ENCODE measurements at regions of chr6 and their contacts with region 1.

Region 1: GRCh38 chr6:31862344-31863227 is at the start of gene NEU1:
- DNase-seq: peak; percentile 100
- H3K4me3 Mint-ChIP-seq: peak within 1 kb of the TSS; percentile 90
- H3K27ac Mint-ChIP-seq: peak within 1 kb of the TSS; percentile 73
- H3K4me1 Mint-ChIP-seq: peaks cover 11% of the 10 kb centered on the region
- H3K27me3 Mint-ChIP-seq: no peaks in the 10 kb centered on the region
- total RNA-seq, gene NEU1: 8.4 to 9.2 TPM

Region 2: GRCh38 chr6:31541658-31542521 is 320.7 kb before region 1 on chr6 and contains the start of gene DDX39B:
- CTCF ChIA-PET with region 1: interaction called, 3 read pairs
- intact Hi-C with region 1: loop called (anchors 1 kb)
- DNase-seq: peak; percentile 95
- H3K4me3 Mint-ChIP-seq: peak within 1 kb of the TSS; percentile 93
- H3K27ac Mint-ChIP-seq: peak within 1 kb of the TSS; percentile 99
- H3K4me1 Mint-ChIP-seq: peaks cover 40% of the 10 kb centered on the region
- H3K27me3 Mint-ChIP-seq: no peaks in the 10 kb centered on the region
- total RNA-seq, gene DDX39B: 600 to 624 TPM

Region 3: DNA sequence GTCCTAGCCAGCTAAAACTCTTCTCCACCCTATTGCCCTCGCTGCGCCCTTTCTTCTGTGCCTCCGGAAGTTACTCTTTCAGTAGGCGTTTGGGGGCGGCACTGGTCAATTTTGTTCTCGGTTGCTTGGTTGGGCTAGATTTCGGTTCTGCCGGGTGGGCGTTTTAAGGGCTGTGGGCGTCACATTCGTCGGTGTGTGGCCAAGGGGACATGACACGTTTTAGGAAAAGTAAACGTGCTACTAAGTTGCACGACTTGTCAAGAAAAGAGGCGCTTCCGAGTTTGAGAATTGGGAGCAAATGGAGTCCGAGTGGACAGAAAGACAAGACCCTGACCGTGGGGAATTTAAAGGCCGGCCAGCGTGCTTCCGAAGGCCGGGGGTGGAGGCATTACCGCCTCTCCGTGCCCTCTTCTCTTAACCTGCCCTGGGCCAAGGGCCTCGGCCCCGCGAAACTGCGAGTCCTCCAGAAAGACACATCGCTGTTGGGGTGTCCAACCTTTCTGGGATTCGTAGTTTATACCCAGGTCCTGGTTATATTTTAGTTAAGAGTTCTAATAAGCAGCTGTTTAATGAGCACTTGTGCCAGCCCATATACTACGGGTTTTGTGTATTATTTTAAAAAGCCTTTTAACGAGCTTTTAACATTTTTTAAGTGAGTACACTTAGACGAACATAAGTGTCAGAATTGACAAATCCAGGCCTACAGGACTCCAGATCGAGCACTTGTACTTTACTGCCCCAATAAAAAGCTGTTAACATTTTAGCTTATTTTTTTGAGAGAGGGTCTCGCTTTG is 209.5 kb before region 1 on chr6:
- CTCF ChIA-PET with region 1: no interaction called
- intact Hi-C with region 1: loop called (anchors 1 kb)
- DNase-seq: peak; percentile 92
- H3K4me3 Mint-ChIP-seq: peak overlapping the region; percentile 96
- H3K27ac Mint-ChIP-seq: peak overlapping the region; percentile 98
- H3K4me1 Mint-ChIP-seq: peaks cover 44% of the 10 kb centered on the region
- H3K27me3 Mint-ChIP-seq: no peaks in the 10 kb centered on the region

Region 4: GRCh38 chr6:31702819-31703522 is 159.6 kb before region 1 on chr6 and contains the start of gene ABHD16A:
- CTCF ChIA-PET with region 1: no interaction called
- intact Hi-C with region 1: loop called (anchors 1 kb)
- DNase-seq: peak; percentile 99
- H3K4me3 Mint-ChIP-seq: peak within 1 kb of the TSS; percentile 99
- H3K27ac Mint-ChIP-seq: peak within 1 kb of the TSS; percentile 97
- H3K4me1 Mint-ChIP-seq: peaks cover 22% of the 10 kb centered on the region
- H3K27me3 Mint-ChIP-seq: no peaks in the 10 kb centered on the region
- total RNA-seq, gene ABHD16A: 19.9 to 22.5 TPM

Region 5: DNA sequence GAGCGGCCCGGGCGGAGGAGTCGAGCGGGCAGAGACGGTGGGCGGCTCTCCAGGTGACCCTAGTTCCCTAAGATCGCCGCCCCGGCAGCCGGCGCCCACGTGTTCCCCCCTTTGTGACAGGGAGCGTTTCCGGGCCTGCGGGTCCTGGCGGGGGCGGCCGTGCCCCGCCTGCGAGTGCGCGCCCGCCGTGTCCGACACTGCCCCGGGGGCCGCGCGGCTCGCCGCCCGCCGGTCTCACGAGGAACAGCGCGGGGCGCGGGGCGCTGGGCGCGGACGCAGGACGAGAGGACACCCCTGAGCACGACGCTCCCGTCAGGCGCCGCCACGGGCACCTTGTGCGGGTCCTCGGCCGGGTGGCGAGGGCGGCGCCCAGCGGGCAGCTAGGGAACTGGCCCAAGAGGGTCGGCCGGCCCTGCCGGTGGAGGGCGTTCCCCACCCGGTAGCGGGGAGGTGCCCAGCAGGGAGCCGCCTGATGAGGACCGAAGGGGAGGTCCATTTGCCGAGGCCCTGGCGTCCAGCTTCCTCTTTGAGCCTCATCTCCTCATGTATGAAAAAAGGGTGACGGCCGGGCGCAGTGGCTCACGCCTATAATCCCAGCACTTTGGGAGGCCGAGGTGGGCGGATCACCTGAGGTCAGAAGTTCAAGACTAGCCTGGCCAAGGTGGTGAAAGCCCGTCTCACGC is 66.8 kb before region 1 on chr6 and contains the start of gene VARS1:
- CTCF ChIA-PET with region 1: interaction called, 3 read pairs
- intact Hi-C with region 1: loop called (anchors 2 kb)
- DNase-seq: peak; percentile 89
- H3K4me3 Mint-ChIP-seq: peak within 1 kb of the TSS; percentile 99
- H3K27ac Mint-ChIP-seq: peak within 1 kb of the TSS; percentile 96
- H3K4me1 Mint-ChIP-seq: peaks cover 43% of the 10 kb centered on the region
- H3K27me3 Mint-ChIP-seq: no peaks in the 10 kb centered on the region
- total RNA-seq, gene VARS1: 157 to 161 TPM

Region 6: GRCh38 chr6:31901953-31902643 is 39.5 kb after region 1 on chr6 and contains the start of gene ZBTB12:
- CTCF ChIA-PET with region 1: interaction called, 3 read pairs
- intact Hi-C with region 1: loop called (anchors 1 kb)
- DNase-seq: peak; percentile 87
- H3K4me3 Mint-ChIP-seq: peak within 1 kb of the TSS; percentile 82
- H3K27ac Mint-ChIP-seq: peak within 1 kb of the TSS; percentile 81
- H3K4me1 Mint-ChIP-seq: peaks cover 29% of the 10 kb centered on the region
- H3K27me3 Mint-ChIP-seq: no peaks in the 10 kb centered on the region
- total RNA-seq, gene ZBTB12: 0.57 to 0.69 TPM